ENCODE measurements at regions of chr21 and their contacts with region 1.

Region 1: DNA sequence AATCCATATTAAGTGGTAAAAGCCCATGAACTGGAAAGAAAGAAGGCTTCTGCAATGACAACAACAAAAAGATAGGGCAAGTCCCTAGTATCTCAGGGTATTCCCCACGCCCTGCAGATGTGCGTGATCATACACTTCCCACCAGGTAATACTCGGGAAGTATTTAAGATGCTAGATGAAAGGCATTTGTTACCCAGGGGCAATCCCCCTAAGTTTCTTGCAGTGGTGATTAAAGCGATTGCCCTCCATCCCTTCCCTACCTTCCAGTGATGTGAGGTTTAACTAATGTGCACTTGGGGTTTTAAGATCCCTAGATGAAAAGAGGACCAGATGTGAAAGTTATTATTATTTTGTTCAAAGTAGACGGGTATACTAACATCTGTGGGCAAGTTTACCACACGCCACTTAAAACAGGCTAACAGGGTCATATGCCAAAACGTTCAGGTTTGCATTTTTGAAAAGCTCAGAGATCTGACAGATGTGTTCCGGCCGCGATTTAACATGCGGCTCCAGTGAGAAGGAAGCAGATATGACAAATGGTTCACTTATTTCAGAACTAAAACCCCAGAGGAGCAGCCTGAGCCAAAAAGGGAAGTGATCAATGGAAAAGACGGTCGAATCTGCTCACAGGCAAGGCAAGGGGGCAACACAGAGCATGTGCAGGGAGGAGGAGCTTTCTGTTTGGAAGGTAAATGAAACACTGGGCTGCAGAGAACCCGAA is 17.4 kb downstream of the TIAM1 start:
- DNase-seq: peak; percentile 95
- ATAC-seq: peak; percentile 96
- H3K4me3 ChIP-seq: 0 out of 2 replicates have a peak overlapping the region, but pooled peaks have one; percentile 15
- H3K27ac ChIP-seq: peak overlapping the region; percentile 41
- H3K4me1 ChIP-seq: peaks cover 3% of the 10 kb centered on the region; the same call in 1 of the 2 replicates
- H3K27me3 ChIP-seq: no peaks in the 10 kb centered on the region
- CTCF ChIP-seq: no peak
- EP300 ChIP-seq: peak; percentile 75 to 89; a peak in 3 of 4 replicates
- POLR2A ChIP-seq: no peak
- RAD21 ChIP-seq: no peak

Region 2: GRCh38 chr21:31161157-31161556 is 165.5 kb before region 1 on chr21:
- CTCF ChIA-PET with region 1: no interaction called
- POLR2A ChIA-PET with region 1: no interaction called
- RAD21 ChIA-PET with region 1: no interaction called
- SMC1A ChIA-PET with region 1: no interaction called
- in situ Hi-C with region 1: no loop called
- intact Hi-C with region 1: no loop called
- DNase-seq: no peak
- ATAC-seq: no peak
- H3K4me3 ChIP-seq: no peak overlapping the region
- H3K27ac ChIP-seq: no peak overlapping the region
- H3K4me1 ChIP-seq: no peaks in the 10 kb centered on the region
- H3K27me3 ChIP-seq: no peaks in the 10 kb centered on the region
- CTCF ChIP-seq: no peak
- EP300 ChIP-seq: no peak
- POLR2A ChIP-seq: no peak
- RAD21 ChIP-seq: no peak

Region 3: GRCh38 chr21:31218830-31219608 is 107.7 kb before region 1 on chr21:
- CTCF ChIA-PET with region 1: interaction called, 4 read pairs
- POLR2A ChIA-PET with region 1: no interaction called
- RAD21 ChIA-PET with region 1: interaction called, 5 read pairs
- SMC1A ChIA-PET with region 1: interaction called, 14 read pairs
- in situ Hi-C with region 1: no loop called
- intact Hi-C with region 1: no loop called
- DNase-seq: no peak
- ATAC-seq: peak; percentile 50
- H3K4me3 ChIP-seq: no peak overlapping the region
- H3K27ac ChIP-seq: no peak overlapping the region
- H3K4me1 ChIP-seq: no peaks in the 10 kb centered on the region
- H3K27me3 ChIP-seq: no peaks in the 10 kb centered on the region
- CTCF ChIP-seq: no peak
- EP300 ChIP-seq: no peak
- POLR2A ChIP-seq: no peak
- RAD21 ChIP-seq: no peak

Region 4: DNA sequence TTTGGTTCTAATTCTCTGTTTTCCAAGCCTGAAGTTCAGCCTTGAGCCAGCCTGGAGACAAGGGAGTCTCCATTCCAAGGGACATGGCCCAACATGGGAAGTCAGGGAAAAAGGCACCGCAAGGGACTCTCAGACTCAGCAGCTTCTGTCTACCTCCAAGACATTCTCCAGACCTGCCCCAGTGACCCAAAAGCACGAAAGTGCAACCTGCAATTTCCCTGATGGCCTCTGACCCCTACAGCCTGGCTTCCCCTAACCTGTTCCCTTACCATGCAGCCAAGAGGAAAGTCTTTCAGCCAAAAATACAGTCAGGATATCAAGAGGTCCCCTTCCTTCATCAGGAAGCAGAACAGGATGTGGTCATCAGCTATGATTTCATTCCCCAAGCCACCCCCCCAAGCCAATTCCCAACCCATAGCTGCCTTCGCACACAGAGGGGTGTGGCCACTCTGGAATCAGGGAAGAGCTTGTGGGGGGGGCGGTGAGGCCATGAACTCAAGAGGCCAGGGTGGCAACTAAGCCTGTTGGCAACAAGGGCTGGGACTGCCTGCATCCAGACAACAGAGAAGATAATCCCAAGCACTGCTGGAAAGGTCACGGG is 41.8 kb before region 1 on chr21:
- CTCF ChIA-PET with region 1: interaction called, 3 read pairs
- POLR2A ChIA-PET with region 1: no interaction called
- RAD21 ChIA-PET with region 1: no interaction called
- SMC1A ChIA-PET with region 1: interaction called, 3 read pairs
- in situ Hi-C with region 1: no loop called
- intact Hi-C with region 1: loop called (anchors 5 kb)
- DNase-seq: no peak
- ATAC-seq: no peak
- H3K4me3 ChIP-seq: no peak overlapping the region
- H3K27ac ChIP-seq: no peak overlapping the region
- H3K4me1 ChIP-seq: no peaks in the 10 kb centered on the region
- H3K27me3 ChIP-seq: no peaks in the 10 kb centered on the region
- CTCF ChIP-seq: no peak
- EP300 ChIP-seq: no peak
- POLR2A ChIP-seq: no peak
- RAD21 ChIP-seq: no peak

Region 5: DNA sequence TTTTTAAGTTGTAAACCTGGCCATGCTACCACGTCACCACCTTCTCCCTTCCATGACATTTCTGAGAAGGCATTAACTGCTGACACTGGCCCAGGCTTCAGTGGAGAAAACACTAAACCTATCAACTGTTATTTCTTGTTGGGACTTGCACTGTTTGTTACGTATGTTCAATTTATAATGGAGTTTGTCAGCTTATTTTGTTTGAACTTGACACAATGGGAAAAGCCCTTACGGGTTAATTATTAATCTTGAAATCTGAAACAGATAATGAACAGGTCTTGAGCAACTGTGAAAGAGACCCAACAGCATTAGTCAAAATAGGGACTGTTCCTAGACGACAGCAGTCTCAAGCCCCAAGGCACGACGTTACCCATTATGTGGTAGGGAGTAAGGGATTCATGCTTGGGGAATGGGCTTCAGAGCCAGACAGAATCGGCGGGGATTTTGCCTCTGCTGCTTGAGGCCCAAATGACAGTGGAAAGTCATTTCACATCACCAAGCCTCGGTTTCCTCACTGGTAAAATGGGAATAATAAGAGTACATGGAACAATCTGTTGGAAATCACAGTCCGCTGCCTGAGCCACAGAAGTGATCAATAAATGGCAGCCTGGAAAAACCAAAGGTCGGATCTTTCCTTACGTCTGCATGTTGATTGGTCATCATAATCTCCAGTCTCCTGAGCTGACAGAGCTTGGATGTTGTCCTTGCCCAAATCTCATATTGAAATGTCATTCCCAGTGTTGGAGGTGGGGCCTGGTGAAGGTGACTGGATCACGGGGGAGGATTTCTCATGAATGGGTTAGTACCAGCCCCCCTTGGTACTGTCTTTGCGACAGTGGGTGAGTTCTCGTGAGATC is 27.2 kb before region 1 on chr21:
- CTCF ChIA-PET with region 1: interaction called, 4 read pairs
- POLR2A ChIA-PET with region 1: no interaction called
- RAD21 ChIA-PET with region 1: interaction called, 18 read pairs
- SMC1A ChIA-PET with region 1: interaction called, 15 read pairs
- in situ Hi-C with region 1: no loop called
- intact Hi-C with region 1: loop called (anchors 2 kb)
- DNase-seq: peak; percentile 51
- ATAC-seq: peak; percentile 91
- H3K4me3 ChIP-seq: no peak overlapping the region
- H3K27ac ChIP-seq: no peak overlapping the region
- H3K4me1 ChIP-seq: no peaks in the 10 kb centered on the region
- H3K27me3 ChIP-seq: no peaks in the 10 kb centered on the region
- CTCF ChIP-seq: no peak
- EP300 ChIP-seq: peak in 1 of 2 experiments; percentile 85; a peak in 1 of 4 replicates
- POLR2A ChIP-seq: no peak
- RAD21 ChIP-seq: no peak

Region 6: DNA sequence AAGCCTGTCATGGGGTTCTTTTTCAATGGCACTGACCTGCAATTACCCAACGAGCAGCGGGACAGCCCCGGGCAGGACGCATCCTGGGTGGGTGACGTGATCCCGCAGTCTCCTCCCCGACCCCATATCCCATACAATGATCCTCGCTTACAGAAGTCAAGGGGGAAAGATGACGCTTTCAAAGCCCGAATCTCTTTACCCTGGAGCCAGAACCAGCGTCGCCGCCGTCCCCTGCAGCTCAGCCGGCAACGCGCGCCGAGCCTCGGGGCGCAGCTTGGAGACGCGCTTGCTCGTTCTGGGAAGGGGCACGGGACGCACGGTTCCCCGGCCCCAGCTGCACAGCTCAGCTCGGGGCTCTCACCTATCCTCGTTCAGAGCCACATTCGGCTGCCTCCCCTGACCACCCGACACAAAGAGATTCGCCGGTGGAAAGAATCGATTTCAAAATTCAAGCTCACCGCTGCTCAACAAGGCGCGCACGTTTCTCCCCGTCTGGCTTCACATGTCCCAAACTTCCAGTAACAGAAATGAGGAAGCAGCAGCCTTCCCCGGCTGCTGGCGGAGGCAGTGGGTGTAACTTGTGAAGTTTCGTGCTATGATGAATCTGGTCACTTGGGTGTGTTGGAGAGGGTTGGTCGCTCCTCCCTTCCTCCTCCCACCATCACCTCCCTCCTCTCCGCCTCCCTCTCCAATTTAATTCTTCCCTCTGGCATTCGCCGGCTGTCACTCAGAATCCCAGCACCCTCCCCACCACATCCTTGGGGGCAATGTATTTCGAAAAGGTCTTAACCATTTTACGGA is 17.2 kb after region 1 on chr21 and contains the start of gene TIAM1:
- CTCF ChIA-PET with region 1: interaction called, 11 read pairs
- POLR2A ChIA-PET with region 1: interaction called, 17 read pairs
- RAD21 ChIA-PET with region 1: interaction called, 10 read pairs
- SMC1A ChIA-PET with region 1: interaction called, 10 read pairs
- in situ Hi-C with region 1: no loop called
- intact Hi-C with region 1: no loop called
- DNase-seq: no peak
- ATAC-seq: peak; percentile 76
- H3K4me3 ChIP-seq: no peak within 1 kb of the TSS
- H3K27ac ChIP-seq: no peak within 1 kb of the TSS
- H3K4me1 ChIP-seq: no peaks in the 10 kb centered on the region
- H3K27me3 ChIP-seq: no peaks in the 10 kb centered on the region; a peak in 1 of 4 replicates
- CTCF ChIP-seq: no peak
- EP300 ChIP-seq: no peak
- POLR2A ChIP-seq: no peak
- RAD21 ChIP-seq: no peak
- polyA plus RNA-seq, gene TIAM1: 0.31 to 0.42 TPM

Region 7: DNA sequence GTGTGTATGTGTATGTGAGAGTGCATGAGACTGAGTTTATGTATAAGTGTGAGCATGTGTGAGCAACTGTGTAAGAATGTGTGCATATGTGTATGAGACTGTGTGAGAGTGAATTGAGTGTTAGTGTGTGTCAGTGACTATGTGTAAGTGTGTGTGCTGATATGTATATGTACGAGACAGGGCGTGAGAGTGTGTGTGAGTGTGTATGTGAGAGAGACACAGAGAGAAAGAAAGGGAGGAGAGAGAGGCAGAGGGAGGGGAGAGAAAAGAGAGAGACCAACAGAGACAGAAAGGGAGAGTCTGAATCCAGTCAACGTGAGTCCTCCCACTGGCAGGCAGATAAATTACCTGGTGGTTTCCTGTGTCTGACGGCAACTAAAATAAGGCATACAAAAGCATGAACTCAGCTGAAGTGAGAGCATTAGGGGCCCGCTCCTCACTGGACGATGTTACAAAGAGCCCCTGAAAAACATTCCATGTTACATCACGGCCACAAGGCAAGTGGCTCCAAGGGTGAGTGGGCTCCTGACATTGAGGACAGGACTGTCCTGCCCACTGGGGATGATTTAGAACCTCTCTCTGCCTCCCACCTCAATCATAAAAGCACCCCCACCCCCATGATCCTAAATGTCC is 83.9 kb after region 1 on chr21:
- CTCF ChIA-PET with region 1: no interaction called
- POLR2A ChIA-PET with region 1: no interaction called
- RAD21 ChIA-PET with region 1: interaction called, 6 read pairs
- SMC1A ChIA-PET with region 1: interaction called, 3 read pairs
- in situ Hi-C with region 1: no loop called
- intact Hi-C with region 1: loop called (anchors 1 kb)
- DNase-seq: no peak
- ATAC-seq: peak; percentile 94
- H3K4me3 ChIP-seq: no peak overlapping the region
- H3K27ac ChIP-seq: no peak overlapping the region
- H3K4me1 ChIP-seq: no peaks in the 10 kb centered on the region
- H3K27me3 ChIP-seq: no peaks in the 10 kb centered on the region
- CTCF ChIP-seq: no peak
- EP300 ChIP-seq: peak in 1 of 2 experiments; percentile 22; a peak in 1 of 4 replicates
- POLR2A ChIP-seq: no peak
- RAD21 ChIP-seq: no peak